WTC11 (cell line): ENCODE measurements at regions of chr2 and their contacts with region 1.

Region 1: GRCh38 chr2:65800998-65801397 is 368.6 kb upstream of the SPRED2 start:
- DNase-seq: peak; percentile 56
- ATAC-seq: peak; percentile 84
- H3K4me3 Mint-ChIP-seq: no peak overlapping the region
- H3K27ac Mint-ChIP-seq: no peak overlapping the region
- H3K4me1 Mint-ChIP-seq: peaks cover 2% of the 10 kb centered on the region; the same call in 1 of the 2 replicates
- H3K27me3 Mint-ChIP-seq: no peaks in the 10 kb centered on the region
- CTCF ChIP-seq: peak; percentile 33; the same call in 1 of the 2 replicates

Region 2: GRCh38 chr2:65722028-65722778 is 78.8 kb before region 1 on chr2:
- CTCF ChIA-PET with region 1: interaction called, 13 read pairs
- POLR2A ChIA-PET with region 1: no interaction called
- DNase-seq: peak; percentile 61
- ATAC-seq: peak; percentile 98
- H3K4me3 Mint-ChIP-seq: no peak overlapping the region
- H3K27ac Mint-ChIP-seq: no peak overlapping the region
- H3K4me1 Mint-ChIP-seq: peaks cover 9% of the 10 kb centered on the region
- H3K27me3 Mint-ChIP-seq: no peaks in the 10 kb centered on the region
- CTCF ChIP-seq: no peak